ENCODE measurements at regions of chr22 and their contacts with region 1.

Region 1: DNA sequence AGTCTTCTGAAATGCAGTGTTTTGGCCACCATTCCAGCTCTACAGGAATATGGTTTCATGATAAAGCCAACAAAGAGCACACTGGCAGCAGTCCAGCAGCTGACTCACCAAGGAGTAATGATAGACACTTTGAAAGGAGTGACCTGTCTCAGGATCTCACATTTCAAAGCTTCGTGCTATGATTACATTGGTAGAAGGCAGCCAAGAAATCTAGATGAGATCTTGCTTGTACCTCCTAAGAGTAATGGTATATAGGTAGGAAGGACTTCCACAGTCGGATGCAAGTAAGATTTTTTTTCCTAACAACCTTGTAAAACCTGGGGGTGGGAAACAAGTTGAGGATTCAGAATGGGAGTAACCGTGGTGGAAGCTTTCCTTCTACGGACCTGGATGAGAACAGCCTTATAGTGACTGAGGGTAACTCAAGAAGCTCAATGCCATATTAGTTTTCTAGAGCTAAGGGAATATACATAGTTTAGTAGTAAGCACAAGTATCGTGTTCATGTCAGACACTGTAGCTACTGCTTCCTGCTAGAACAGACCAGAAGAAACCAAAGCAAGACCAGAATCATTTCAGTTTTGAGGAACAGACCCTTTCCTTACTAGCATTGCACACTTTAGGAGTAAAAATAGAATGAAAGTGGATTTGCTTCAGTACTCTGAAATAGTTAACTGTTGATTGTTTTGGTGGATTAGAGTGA is 25.0 kb downstream of the MTMR3 start:
- H3K4me3 Mint-ChIP-seq: no peak overlapping the region
- H3K27ac Mint-ChIP-seq: peak overlapping the region; percentile 45
- H3K4me1 Mint-ChIP-seq: peaks cover 55% of the 10 kb centered on the region
- H3K27me3 Mint-ChIP-seq: no peaks in the 10 kb centered on the region

Region 2: DNA sequence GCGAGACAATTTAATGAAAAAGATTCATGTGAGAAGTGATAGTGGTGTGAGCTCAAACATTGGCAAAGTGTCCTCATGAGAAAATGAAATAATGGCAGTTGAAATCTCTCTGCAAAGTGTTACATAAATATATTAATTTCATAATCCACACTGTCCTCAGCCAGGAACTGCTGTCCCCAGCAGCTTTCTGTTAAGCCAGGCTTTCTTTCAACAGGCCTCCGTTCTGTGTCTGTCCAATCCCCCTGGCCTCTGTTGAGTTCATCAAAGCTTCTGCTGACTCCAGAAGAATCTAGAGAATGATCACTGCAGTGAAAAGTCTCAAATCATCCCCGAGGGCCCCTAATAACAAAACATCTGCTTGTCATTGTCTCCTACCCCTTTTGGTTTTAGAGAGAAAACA is 59.9 kb before region 1 on chr22:
- intact Hi-C with region 1: no loop called
- H3K4me3 Mint-ChIP-seq: no peak overlapping the region
- H3K27ac Mint-ChIP-seq: no peak overlapping the region
- H3K4me1 Mint-ChIP-seq: no peaks in the 10 kb centered on the region
- H3K27me3 Mint-ChIP-seq: no peaks in the 10 kb centered on the region

Region 3: GRCh38 chr22:29883775-29884097 is 24.2 kb before region 1 on chr22:
- intact Hi-C with region 1: loop called (anchors 2 kb)
- H3K4me3 Mint-ChIP-seq: peak overlapping the region; percentile 88
- H3K27ac Mint-ChIP-seq: peak overlapping the region; percentile 87
- H3K4me1 Mint-ChIP-seq: peaks cover 10% of the 10 kb centered on the region
- H3K27me3 Mint-ChIP-seq: no peaks in the 10 kb centered on the region

Region 4: DNA sequence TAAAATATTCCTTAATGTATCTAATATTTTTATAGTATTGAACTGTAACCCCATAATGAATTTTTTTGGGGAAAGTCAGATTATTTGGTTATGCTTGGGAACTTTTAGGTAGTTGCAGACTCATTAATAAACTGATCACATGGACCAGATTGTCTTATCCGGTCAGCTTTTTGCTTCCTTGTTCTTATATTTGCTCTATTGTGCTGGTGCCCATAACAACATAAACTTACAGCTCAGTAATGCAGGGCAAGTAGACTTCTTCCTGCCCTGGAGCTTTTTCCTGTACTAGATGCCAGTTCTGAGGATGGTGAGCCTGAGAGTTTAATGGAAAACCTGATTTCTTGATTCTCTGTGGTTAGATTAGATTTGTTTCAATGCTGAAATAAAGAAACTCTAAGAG is 28.2 kb after region 1 on chr22:
- intact Hi-C with region 1: no loop called
- H3K4me3 Mint-ChIP-seq: no peak overlapping the region
- H3K27ac Mint-ChIP-seq: no peak overlapping the region
- H3K4me1 Mint-ChIP-seq: peaks cover 22% of the 10 kb centered on the region
- H3K27me3 Mint-ChIP-seq: no peaks in the 10 kb centered on the region

Region 5: GRCh38 chr22:29947410-29948384 is 39.7 kb after region 1 on chr22:
- intact Hi-C with region 1: loop called (anchors 5 kb)
- H3K4me3 Mint-ChIP-seq: no peak overlapping the region
- H3K27ac Mint-ChIP-seq: no peak overlapping the region
- H3K4me1 Mint-ChIP-seq: peaks cover 37% of the 10 kb centered on the region
- H3K27me3 Mint-ChIP-seq: no peaks in the 10 kb centered on the region